Transverse colon (tissue), 4 donors: ENCODE measurements at regions of chr4 and their contacts with region 1.

Region 1: DNA sequence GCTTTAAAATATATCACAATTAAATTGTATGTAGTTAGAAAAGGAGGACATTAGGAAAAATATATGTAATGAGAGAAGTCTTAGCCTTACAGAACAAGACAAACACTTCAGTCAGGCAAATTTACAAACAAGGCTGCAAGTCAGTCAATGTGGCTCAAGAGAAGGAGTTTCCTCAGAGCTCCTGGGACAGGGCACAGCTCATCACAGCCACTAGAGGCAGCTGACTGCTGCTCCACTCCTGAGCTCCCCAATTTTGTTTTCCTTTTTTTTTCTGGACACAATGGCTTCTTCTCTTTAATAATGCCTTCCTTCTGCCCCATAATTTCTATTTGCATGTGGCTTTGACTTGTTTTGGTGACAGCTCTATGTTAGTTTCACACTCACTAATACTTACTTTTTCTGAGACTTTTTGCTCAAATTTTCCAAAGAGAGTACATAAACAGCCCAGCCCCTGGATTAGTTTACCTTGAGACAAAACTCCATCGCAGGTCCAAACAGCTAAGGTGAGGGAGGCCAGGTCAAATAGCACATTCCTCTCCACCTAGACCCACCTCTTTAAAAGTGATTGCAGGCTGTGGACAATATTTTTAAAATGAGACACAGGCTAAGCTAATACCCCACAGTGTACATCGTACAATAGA is 850.4 kb upstream of the FRG1 start:
- DNase-seq: no peak
- H3K4me3 ChIP-seq: no peak overlapping the region
- H3K27ac ChIP-seq: no peak overlapping the region
- H3K4me1 ChIP-seq: no peaks in the 10 kb centered on the region
- H3K27me3 ChIP-seq: no peaks in the 10 kb centered on the region
- CTCF ChIP-seq: no peak
- EP300 ChIP-seq: no peak
- POLR2A ChIP-seq: no peak

Region 2: DNA sequence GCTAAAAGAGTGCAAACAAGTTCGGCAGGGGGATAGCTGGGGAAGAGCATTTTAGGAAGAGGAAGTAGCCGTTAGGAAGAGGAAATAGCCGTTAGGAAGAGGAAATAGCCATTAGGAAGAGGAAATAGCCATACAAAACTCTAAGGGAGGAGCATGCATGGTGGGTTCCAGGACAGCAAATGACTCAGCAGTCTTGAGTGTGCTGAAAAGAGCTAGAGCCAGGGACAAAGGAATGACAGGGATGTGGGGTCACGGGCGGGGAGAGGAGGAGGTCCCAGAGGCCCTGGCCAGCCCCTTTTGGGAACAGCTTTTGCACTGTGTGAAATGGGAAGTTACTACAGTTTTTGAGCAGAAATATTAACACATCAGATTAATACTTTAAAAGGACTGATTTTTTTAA is 68.5 kb before region 1 on chr4:
- in situ Hi-C with region 1: no loop called
- intact Hi-C with region 1: loop called (anchors 2 kb)
- DNase-seq: no peak
- H3K4me3 ChIP-seq: no peak overlapping the region
- H3K27ac ChIP-seq: peak overlapping the region in 2 of 4 donors; percentile 16 to 39
- H3K4me1 ChIP-seq: no peaks in the 10 kb centered on the region
- H3K27me3 ChIP-seq: no peaks in the 10 kb centered on the region
- CTCF ChIP-seq: no peak
- EP300 ChIP-seq: no peak
- POLR2A ChIP-seq: no peak

Region 3: GRCh38 chr4:189060104-189060503 is 30.2 kb before region 1 on chr4:
- in situ Hi-C with region 1: no loop called
- intact Hi-C with region 1: loop called (anchors 1 kb)
- DNase-seq: no peak
- H3K4me3 ChIP-seq: no peak overlapping the region
- H3K27ac ChIP-seq: no peak overlapping the region
- H3K4me1 ChIP-seq: no peaks in the 10 kb centered on the region
- H3K27me3 ChIP-seq: no peaks in the 10 kb centered on the region
- CTCF ChIP-seq: no peak
- EP300 ChIP-seq: no peak
- POLR2A ChIP-seq: no peak